Activated CD4-positive, alpha-beta T cell treated with anti-CD3 and anti-CD28 coated beads for 36 hours (primary cell): ENCODE measurements at regions of chr11 and their contacts with region 1.

Region 1: GRCh38 chr11:78139422-78140391 is at the start of gene ALG8:
- DNase-seq: peak; percentile 98
- ATAC-seq: peak; percentile 93
- H3K4me3 Mint-ChIP-seq: peak within 1 kb of the TSS; percentile 86
- H3K27ac Mint-ChIP-seq: peak within 1 kb of the TSS; percentile 95
- H3K4me1 Mint-ChIP-seq: peaks cover 32% of the 10 kb centered on the region
- H3K27me3 Mint-ChIP-seq: no peaks in the 10 kb centered on the region
- total RNA-seq, gene ALG8: 59.4 to 85.2 TPM

Region 2: DNA sequence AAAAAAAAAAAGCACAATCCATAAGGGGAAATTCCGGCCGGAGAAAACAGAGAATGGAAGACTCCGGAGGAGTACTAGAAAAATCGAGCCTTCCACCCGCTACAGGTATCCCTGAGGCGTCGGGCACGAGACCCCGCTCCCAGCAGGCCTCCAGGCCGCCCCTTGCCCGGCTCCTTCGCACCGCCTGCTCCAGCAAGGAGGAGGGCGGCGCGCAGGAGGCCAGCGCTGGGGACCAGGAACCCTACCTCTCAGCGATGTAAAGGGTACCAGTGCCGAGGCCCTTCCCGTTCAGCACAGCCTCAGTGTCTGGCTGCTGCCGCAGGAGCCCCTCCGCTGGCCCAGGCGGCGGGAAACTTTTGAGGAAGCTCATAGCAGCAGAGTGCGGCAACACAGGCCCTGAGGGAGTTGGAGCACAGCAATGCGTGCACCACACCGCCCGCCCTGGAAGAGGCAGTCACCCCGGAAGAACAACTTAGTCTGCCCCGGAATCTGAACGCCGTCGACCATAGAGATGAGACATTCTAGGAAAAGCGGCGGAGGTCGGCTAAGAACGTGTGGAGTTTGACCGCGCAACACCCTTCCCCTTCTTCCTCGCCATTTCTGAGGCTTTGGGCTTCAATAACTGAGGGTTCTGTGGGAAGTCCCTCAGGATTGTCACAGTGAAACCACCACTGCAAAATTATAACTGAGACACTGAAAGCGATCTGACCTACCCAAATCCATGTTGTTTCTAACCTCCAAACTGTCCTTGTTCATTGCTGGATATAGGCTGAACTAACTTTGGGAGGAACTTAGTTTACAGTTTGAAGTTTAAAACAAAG is 502.2 kb before region 1 on chr11 and contains the start of gene CLNS1A:
- CTCF ChIA-PET with region 1: no interaction called
- POLR2A ChIA-PET with region 1: no interaction called
- intact Hi-C with region 1: loop called in 1 of 2 experiments (anchors 5 kb)
- DNase-seq: peak; percentile 91
- ATAC-seq: peak; percentile 98
- H3K4me3 Mint-ChIP-seq: peak within 1 kb of the TSS; percentile 85
- H3K27ac Mint-ChIP-seq: peak within 1 kb of the TSS; percentile 94
- H3K4me1 Mint-ChIP-seq: peaks cover 40% of the 10 kb centered on the region
- H3K27me3 Mint-ChIP-seq: no peaks in the 10 kb centered on the region
- total RNA-seq, gene CLNS1A: 185 to 212 TPM

Region 3: DNA sequence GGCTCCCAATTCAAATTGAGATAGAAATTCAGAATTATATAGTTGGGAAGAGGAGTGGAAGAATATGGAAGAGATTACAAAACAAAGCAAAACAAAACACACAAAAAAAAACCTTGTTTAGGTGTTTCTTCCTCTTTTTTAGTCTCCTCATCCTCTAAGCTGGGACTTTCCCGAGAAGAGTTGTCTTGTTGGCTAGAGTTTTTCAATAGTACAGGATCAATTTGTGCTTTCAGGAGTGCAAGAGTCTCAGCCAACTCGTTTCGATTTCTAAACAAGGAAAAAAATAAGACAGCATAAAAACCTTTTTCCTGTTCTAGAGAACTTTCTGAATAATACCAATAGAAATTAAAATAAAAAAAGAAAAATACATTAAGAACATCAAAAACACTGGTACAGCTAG is 414.3 kb before region 1 on chr11:
- CTCF ChIA-PET with region 1: no interaction called
- POLR2A ChIA-PET with region 1: no interaction called
- intact Hi-C with region 1: no loop called
- DNase-seq: no peak
- ATAC-seq: no peak
- H3K4me3 Mint-ChIP-seq: no peak overlapping the region
- H3K27ac Mint-ChIP-seq: no peak overlapping the region
- H3K4me1 Mint-ChIP-seq: peaks cover 4% of the 10 kb centered on the region
- H3K27me3 Mint-ChIP-seq: no peaks in the 10 kb centered on the region

Region 4: DNA sequence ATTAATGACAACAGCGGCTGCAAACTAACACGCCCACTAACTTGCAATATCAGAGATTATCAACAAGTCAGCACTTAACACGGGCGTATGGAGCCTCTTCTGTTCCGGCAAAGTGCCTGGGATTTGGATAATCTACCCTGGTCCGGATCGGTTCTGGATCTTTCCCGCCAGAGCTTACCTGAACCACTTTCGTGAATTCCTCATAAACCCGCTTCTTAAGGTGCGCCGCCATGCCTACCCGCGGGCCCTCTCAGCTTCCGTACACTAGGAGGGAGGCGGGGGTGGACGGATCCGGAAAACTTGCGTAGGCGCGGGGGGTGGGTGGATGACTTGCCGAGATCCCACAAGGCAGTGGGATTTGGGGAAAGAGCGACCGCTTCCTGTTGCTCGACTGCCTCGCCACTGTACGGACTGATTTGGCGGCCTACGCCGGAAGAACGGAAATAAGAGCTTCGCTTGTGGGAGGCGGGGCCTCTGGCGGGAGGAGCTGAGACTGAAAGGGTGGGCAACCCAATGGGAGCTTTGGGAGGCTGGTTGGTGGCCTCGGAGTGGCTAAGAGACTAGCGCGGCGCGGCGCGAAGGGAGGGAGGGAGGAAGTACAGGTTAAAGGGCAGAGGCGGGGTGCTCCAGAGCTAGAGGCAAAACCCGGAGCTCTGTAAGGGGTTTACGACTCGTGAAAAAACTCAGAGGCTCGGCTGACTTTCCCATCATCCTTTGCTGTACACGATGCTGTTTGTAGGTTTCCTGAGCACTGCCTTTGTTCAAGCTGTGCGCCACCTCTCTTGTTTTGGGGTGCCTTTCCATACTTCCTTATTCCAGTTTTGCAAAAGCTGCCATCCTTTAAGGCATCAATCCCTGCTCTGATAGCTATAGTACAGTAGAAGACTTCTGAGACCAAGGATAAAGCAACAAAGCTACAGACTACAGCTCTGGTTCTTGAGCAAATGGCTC is 145.0 kb before region 1 on chr11 and contains the start of gene INTS4:
- CTCF ChIA-PET with region 1: interaction called, 3 read pairs
- POLR2A ChIA-PET with region 1: interaction called, 11 read pairs
- intact Hi-C with region 1: loop called (anchors 1 kb)
- DNase-seq: peak; percentile 99
- ATAC-seq: peak; percentile 99
- H3K4me3 Mint-ChIP-seq: peak within 1 kb of the TSS; percentile 86
- H3K27ac Mint-ChIP-seq: peak within 1 kb of the TSS; percentile 97
- H3K4me1 Mint-ChIP-seq: peaks cover 29% of the 10 kb centered on the region
- H3K27me3 Mint-ChIP-seq: no peaks in the 10 kb centered on the region
- total RNA-seq, gene INTS4: 53.8 to 55.4 TPM

Region 5: DNA sequence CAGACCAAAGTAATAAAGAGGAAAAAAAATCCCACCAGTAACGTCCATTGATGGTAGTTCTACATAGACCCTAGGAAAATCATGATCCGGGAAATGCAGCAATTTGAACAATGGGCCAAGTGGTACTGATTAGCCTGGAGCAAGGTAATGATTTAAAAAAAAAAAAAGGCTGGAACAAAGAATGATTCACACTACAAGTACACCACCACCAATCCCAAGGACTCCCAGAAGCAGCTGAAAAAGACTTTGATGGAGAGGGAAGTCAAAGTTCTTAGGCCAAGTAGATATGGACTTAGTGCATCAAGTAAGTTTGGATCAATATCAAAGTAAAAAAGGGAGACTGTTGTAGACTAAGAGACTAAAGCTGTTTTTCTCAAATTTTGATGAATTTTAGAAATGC is 128.4 kb before region 1 on chr11:
- CTCF ChIA-PET with region 1: no interaction called
- POLR2A ChIA-PET with region 1: no interaction called
- intact Hi-C with region 1: no loop called
- DNase-seq: no peak
- ATAC-seq: no peak
- H3K4me3 Mint-ChIP-seq: no peak overlapping the region
- H3K27ac Mint-ChIP-seq: no peak overlapping the region
- H3K4me1 Mint-ChIP-seq: no peaks in the 10 kb centered on the region
- H3K27me3 Mint-ChIP-seq: peaks cover 2% of the 10 kb centered on the region

Region 6: DNA sequence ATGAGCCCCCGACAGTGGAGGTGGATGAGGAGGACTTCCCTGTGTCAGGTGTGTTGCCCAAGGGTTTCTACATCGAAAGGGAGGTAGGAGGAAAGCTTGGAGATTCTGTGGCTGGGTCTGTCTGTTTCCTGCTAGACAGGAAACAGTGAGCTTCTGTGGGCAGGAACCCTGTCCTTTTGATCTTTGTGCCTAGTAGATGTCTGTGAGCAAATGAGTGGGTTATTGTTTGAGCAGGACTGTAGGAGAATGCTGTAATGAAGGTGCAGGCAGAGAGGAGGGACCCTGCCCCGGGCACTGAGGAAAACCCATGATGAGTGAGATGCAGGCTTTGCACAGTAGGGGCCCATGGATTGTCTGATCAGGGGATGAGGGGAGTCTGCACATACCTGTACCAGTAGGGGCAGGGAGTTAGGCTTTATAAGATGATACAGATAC is 63.0 kb after region 1 on chr11:
- CTCF ChIA-PET with region 1: interaction called, 3 read pairs
- POLR2A ChIA-PET with region 1: no interaction called
- intact Hi-C with region 1: loop called in 1 of 2 experiments (anchors 5 kb)
- DNase-seq: peak; percentile 61
- ATAC-seq: peak; percentile 89
- H3K4me3 Mint-ChIP-seq: peak overlapping the region; percentile 47
- H3K27ac Mint-ChIP-seq: peak overlapping the region; percentile 93
- H3K4me1 Mint-ChIP-seq: peaks cover 43% of the 10 kb centered on the region
- H3K27me3 Mint-ChIP-seq: no peaks in the 10 kb centered on the region

Region 7: GRCh38 chr11:78574386-78575381 is 435.0 kb after region 1 on chr11 and contains the start of gene NARS2:
- CTCF ChIA-PET with region 1: no interaction called
- POLR2A ChIA-PET with region 1: no interaction called
- intact Hi-C with region 1: loop called (anchors 1 to 10 kb)
- DNase-seq: peak; percentile 100
- ATAC-seq: peak; percentile 99
- H3K4me3 Mint-ChIP-seq: peak within 1 kb of the TSS; percentile 97
- H3K27ac Mint-ChIP-seq: peak within 1 kb of the TSS; percentile 89
- H3K4me1 Mint-ChIP-seq: peaks cover 28% of the 10 kb centered on the region
- H3K27me3 Mint-ChIP-seq: no peaks in the 10 kb centered on the region
- total RNA-seq, gene NARS2: 22.9 to 33.4 TPM